Calu3 (cell line): ENCODE measurements at regions of chr5 and their contacts with region 1.

Region 1: DNA sequence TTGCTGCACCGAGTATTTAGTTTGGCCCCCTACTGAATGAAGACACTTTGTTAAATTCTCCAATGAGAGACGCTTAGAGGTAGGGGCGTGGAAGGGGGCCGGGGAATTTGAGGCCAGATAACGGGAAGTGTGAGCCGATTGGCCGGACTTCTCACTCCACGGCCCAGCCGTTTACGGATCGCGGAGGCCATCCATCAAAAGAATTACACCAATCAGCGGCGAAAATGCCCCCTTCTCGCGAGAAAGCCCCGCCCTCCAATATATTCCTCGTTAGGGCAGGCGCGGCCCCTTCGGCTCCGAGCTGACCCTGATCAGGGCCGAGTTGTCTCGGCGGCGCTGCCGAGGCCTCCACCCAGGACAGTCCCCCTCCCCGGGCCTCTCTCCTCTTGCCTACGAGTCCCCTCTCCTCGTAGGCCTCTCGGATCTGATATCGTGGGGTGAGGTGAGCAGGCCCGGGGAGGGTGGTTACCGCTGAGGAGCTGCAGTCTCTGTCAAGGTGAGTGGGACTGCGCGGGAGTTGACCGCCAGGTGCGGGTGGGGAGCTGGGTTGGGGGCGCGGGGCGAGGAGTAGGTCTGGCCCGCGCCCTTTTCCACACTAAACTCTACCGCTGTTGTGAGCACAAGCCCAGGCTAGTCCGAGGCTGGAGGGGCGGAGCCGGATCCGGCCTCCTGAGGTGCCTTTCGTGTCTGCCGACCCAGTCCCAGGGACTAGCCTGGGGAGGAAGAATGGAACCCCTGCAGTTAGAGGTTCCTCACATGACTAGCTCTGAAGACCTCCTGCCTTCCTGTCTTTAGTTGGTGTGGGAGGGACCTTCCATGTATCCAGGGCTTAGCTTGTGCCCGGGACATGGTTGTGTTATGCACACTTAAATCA is at the start of gene CCNG1:
- DNase-seq: peak; percentile 96
- H3K4me3 Mint-ChIP-seq: peak within 1 kb of the TSS; percentile 88
- H3K27ac Mint-ChIP-seq: peak within 1 kb of the TSS; percentile 82
- H3K4me1 Mint-ChIP-seq: peaks cover 37% of the 10 kb centered on the region
- H3K27me3 Mint-ChIP-seq: no peaks in the 10 kb centered on the region
- CTCF ChIP-seq: no peak
- total RNA-seq, gene CCNG1: 105 and 109 TPM in 2 replicates

Region 2: DNA sequence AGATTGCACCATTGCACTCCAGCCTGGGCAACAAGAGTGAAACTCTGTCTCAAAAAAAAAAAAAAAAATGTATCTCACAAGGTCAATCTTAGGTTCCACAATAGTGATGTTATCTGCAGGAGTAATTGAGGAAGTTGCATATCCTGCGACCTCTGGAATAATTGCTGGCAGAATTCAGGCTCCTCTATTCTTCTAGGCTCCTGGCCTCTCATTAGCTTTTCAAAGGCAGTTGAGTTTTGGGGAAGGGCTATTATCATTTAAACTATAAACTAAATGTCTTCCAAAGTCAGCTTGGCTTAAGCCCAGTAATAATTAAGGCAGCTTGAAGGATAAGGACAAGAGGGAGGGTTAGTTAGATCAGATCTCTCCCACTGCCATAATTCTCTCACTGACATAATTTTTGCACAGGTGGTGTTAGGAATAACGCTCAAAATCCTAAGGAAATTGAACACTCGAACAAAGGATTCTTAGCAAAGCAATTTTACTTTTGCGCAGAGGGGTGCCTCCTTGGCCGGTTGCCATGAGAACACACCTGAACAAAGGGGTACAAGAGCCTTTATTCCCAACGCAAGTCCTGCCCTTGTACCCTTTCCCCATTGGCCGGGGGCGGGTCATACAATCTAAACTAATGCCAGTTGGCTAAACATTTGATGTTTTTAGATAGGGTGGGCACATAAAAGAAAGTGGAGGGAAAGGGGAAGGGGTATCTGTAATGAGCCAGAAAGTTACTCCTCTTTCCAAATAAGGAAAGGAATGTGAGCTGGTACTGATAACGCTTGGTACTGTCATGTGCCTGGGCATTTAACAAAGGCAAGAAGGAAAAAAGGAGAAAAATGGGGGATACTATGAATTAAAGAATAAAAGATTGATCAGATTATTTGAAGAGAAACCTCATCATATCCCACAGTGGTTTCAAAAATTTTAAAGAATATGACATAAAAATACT is 106.5 kb before region 1 on chr5:
- CTCF ChIA-PET with region 1: no interaction called
- intact Hi-C with region 1: no loop called
- DNase-seq: no peak
- H3K4me3 Mint-ChIP-seq: no peak overlapping the region
- H3K27ac Mint-ChIP-seq: no peak overlapping the region
- H3K4me1 Mint-ChIP-seq: no peaks in the 10 kb centered on the region
- H3K27me3 Mint-ChIP-seq: no peaks in the 10 kb centered on the region
- CTCF ChIP-seq: no peak

Region 3: GRCh38 chr5:163421673-163422072 is 15.9 kb before region 1 on chr5:
- CTCF ChIA-PET with region 1: interaction called, 3 read pairs
- intact Hi-C with region 1: loop called (anchors 2 kb)
- DNase-seq: no peak
- H3K4me3 Mint-ChIP-seq: no peak overlapping the region
- H3K27ac Mint-ChIP-seq: no peak overlapping the region
- H3K4me1 Mint-ChIP-seq: peaks cover 13% of the 10 kb centered on the region
- H3K27me3 Mint-ChIP-seq: no peaks in the 10 kb centered on the region
- CTCF ChIP-seq: no peak

Region 4: DNA sequence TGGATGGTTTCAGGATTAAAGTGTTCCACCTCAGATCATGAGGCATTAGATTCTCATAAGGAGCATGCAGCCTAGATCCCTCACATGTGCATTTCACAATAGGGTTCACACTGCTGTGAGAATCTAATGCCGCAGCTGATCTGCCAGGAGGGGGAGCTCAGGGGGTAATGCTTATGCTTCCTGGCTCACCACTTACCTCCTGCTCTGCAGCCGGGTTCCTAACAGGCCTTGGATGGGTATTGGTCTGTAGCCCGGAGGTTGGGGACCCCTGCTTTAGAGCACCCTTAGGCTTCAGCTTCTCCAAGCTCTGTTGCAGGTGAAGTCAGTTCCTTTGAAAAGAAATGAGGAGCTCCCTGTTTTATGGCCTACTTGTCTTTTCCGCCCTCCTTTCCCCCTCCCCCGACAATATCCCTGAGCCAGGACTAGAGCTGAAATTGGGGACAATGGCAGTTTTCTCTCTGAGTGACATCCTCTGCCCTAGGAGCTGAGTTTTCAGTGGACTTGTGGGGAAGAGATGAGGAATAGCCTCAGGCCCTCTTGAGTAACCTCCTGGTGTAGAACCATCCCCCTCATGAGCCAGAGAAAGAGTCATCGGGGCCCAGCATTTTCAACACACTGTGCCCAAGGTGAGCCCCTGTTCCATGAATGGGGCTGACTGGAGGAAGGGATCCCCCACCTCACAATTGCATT is 51.7 kb after region 1 on chr5:
- CTCF ChIA-PET with region 1: no interaction called
- intact Hi-C with region 1: no loop called
- DNase-seq: no peak
- H3K4me3 Mint-ChIP-seq: no peak overlapping the region
- H3K27ac Mint-ChIP-seq: no peak overlapping the region
- H3K4me1 Mint-ChIP-seq: no peaks in the 10 kb centered on the region
- H3K27me3 Mint-ChIP-seq: no peaks in the 10 kb centered on the region
- CTCF ChIP-seq: no peak